WTC11 (cell line): ENCODE measurements at regions of chr1 and their contacts with region 1.

Region 1: DNA sequence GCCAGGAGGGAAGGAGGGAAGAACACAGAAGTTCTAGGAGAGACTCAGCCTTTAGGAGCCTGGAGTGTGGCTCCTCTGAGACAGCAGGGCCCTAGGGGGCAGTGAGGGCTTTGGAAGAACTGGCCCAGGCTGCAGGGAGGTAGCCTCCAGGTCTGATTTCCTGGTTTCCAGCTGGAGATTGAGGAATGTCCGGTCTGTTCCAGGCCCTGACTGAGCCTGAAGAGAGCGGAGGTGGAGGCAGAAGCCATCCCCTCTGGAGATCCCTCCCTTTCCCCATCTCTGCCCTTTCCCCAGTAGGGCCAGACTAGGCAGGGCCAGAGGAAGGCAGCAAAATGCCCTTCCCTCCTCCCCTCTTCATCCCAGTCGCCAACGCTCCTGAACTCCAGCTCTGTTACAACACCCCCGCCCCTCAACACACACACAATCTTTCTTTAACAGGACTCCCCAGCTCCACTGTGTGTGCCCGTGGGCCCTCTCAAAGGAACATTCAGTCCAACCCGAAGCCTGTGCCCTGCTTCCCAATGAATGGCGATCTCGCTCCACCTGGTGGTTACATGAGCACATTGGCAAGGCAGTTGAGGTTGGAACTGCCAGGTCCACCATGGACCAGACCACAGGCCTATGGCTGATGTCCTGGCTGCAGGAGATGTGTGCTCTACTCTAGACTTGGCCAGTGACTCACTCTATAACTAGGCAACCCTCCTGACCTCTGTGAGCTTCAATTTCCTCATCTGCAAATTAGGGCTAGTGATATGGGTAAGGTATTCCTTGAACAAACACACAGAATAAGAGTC is 32.0 kb downstream of the MAP7D1 start:
- DNase-seq: peak; percentile 86
- ATAC-seq: peak; percentile 94
- H3K4me3 Mint-ChIP-seq: peak overlapping the region; percentile 56
- H3K27ac Mint-ChIP-seq: peak overlapping the region; percentile 94
- H3K4me1 Mint-ChIP-seq: peaks cover 15% of the 10 kb centered on the region
- H3K27me3 Mint-ChIP-seq: no peaks in the 10 kb centered on the region
- CTCF ChIP-seq: peak; percentile 70

Region 2: DNA sequence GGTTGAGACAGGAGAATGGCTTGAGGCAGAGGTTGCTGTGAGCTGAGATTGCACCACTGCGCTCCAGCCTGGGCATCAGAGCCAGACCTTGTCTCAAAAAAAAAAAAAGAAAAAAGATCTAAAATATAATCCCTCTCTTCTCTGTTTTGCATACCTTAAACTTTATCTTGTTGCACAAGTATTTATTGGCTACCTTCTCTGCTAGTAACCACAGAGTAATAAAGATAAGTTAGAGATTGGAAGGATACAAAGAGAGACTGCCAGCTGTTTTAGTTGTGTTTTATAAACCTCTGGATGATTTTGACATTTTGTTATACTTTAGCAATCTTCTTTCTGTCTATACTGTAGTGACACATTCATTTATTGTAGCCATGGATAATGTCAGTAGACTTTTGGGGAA is 229.4 kb before region 1 on chr1:
- CTCF ChIA-PET with region 1: no interaction called
- POLR2A ChIA-PET with region 1: no interaction called
- DNase-seq: no peak
- ATAC-seq: no peak
- H3K4me3 Mint-ChIP-seq: no peak overlapping the region
- H3K27ac Mint-ChIP-seq: no peak overlapping the region
- H3K4me1 Mint-ChIP-seq: no peaks in the 10 kb centered on the region
- H3K27me3 Mint-ChIP-seq: no peaks in the 10 kb centered on the region
- CTCF ChIP-seq: no peak

Region 3: DNA sequence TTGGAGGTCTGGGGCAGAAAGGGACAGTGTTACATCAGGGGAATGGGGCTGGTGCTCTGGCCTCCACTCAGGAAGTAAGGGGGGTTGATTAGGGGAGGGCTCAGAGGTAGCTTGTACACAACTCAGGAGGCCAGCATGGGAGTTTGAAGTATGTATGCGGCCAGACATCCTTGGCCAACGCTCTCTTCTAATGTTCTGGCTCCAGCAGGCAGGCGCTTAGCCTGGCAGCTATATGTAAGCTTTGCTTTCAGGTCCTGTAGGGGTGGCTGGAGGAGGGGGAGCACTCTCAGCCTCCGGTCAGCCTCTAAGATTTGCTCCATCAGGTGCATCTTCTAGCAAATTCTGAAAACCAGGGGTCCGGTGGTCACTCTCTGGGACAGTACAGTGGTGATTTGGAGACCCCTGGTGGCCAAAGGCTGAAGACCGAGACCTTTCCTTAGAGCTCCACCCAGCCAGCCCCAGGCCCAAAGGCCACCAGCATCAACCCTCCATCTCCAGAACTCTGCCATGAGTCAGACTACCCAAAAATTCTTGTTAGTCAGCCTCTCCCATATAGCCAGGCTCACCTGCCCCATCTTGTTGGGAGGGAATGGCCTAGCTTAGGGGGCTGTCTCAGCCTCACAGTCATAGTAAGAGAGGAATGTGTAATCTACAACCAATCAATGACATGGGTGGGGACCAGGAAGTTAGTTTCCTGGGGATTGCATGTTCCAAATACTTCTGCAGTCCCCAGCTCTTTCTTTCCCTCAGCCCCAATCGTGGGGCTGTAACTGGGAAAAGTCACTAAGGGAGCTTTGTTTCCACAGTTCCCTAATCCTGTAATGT is 53.3 kb before region 1 on chr1:
- CTCF ChIA-PET with region 1: interaction called, 26 read pairs
- POLR2A ChIA-PET with region 1: interaction called, 3 read pairs
- DNase-seq: peak; percentile 81
- ATAC-seq: peak; percentile 95
- H3K4me3 Mint-ChIP-seq: no peak overlapping the region
- H3K27ac Mint-ChIP-seq: peak overlapping the region; percentile 26
- H3K4me1 Mint-ChIP-seq: peaks cover 6% of the 10 kb centered on the region
- H3K27me3 Mint-ChIP-seq: no peaks in the 10 kb centered on the region
- CTCF ChIP-seq: peak; percentile 80

Region 4: GRCh38 chr1:36160949-36161485 is 27.0 kb before region 1 on chr1:
- CTCF ChIA-PET with region 1: interaction called, 71 read pairs
- POLR2A ChIA-PET with region 1: interaction called, 9 read pairs
- DNase-seq: peak; percentile 71
- ATAC-seq: peak; percentile 76
- H3K4me3 Mint-ChIP-seq: peak overlapping the region; percentile 67
- H3K27ac Mint-ChIP-seq: peak overlapping the region; percentile 88
- H3K4me1 Mint-ChIP-seq: peaks cover 41% of the 10 kb centered on the region
- H3K27me3 Mint-ChIP-seq: no peaks in the 10 kb centered on the region
- CTCF ChIP-seq: no peak

Region 5: GRCh38 chr1:36175137-36176095 is 12.6 kb before region 1 on chr1:
- CTCF ChIA-PET with region 1: interaction called, 27 read pairs
- POLR2A ChIA-PET with region 1: interaction called, 24 read pairs
- DNase-seq: no peak
- ATAC-seq: no peak
- H3K4me3 Mint-ChIP-seq: peak overlapping the region; percentile 41
- H3K27ac Mint-ChIP-seq: no peak overlapping the region; the same call in 1 of the 2 replicates
- H3K4me1 Mint-ChIP-seq: peaks cover 22% of the 10 kb centered on the region
- H3K27me3 Mint-ChIP-seq: no peaks in the 10 kb centered on the region
- CTCF ChIP-seq: no peak

Region 6: GRCh38 chr1:36223993-36224536 is 36.1 kb after region 1 on chr1 and contains the start of gene THRAP3:
- CTCF ChIA-PET with region 1: interaction called, 13 read pairs
- POLR2A ChIA-PET with region 1: interaction called, 4 read pairs
- DNase-seq: peak; percentile 100
- ATAC-seq: peak; percentile 95
- H3K4me3 Mint-ChIP-seq: peak within 1 kb of the TSS; percentile 97
- H3K27ac Mint-ChIP-seq: peak within 1 kb of the TSS; percentile 100
- H3K4me1 Mint-ChIP-seq: peaks cover 16% of the 10 kb centered on the region
- H3K27me3 Mint-ChIP-seq: no peaks in the 10 kb centered on the region
- CTCF ChIP-seq: no peak
- total RNA-seq, gene THRAP3: 150 to 160 TPM (median 153 TPM) in 3 replicates

Region 7: GRCh38 chr1:36306902-36307456 is 119.0 kb after region 1 on chr1:
- CTCF ChIA-PET with region 1: interaction called, 12 read pairs
- POLR2A ChIA-PET with region 1: interaction called, 10 read pairs
- DNase-seq: peak; percentile 98
- ATAC-seq: peak; percentile 95
- H3K4me3 Mint-ChIP-seq: peak overlapping the region; percentile 99
- H3K27ac Mint-ChIP-seq: peak overlapping the region; percentile 94; the same call in 1 of the 2 replicates
- H3K4me1 Mint-ChIP-seq: peaks cover 17% of the 10 kb centered on the region
- H3K27me3 Mint-ChIP-seq: no peaks in the 10 kb centered on the region
- CTCF ChIP-seq: no peak